ENCODE measurements at regions of chr5 and their contacts with region 1.

Region 1: DNA sequence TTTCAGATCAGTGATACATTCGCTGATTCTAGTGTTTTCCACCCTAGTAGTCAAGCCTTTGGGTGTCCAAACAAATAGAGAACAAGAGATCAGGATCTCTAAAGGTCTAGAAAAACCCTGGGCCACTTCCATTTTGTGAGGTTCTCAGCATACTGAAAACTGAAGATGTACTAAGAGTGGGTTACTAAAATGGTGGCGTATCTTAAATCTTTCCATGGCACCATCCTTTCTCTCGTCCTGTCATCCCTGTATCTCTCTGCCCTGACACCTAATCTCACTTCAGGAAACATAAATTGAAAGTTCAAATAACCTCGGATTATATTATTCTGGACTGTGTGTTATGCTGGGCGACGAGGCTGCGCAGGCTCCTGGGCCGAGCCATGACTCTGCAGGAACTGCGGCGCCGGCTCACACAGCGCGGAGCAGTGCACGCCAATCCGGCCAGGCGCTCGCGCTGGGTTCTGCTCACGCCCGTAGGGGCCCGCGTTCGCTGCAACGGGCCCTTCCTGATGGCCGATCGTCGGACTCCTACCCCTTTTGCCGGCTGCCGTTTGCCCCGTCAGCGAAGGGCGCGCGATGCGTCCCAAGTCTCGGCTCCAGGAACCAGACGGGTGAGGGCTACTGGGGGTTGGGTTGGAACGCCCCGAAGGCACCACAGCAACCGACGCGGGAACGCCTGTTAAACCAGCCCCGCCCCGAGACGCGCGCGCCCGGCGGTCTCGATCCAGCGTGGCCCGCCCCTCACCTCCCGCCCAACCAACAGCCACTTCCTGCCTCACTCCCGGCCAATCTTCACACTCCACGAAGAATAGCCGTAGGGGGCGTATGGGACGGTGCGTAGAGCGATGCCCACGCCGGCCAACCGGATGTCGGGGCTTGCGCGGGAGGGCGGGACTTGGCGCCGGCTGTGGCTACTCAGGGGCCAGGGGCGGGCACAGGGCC is 503 bp upstream of the CANX start:
- DNase-seq: peak; percentile 99
- H3K4me3 ChIP-seq: peak overlapping the region; percentile 76 to 93
- H3K4me3 Mint-ChIP-seq: peak overlapping the region; percentile 91 to 97 (median 95)
- H3K27ac ChIP-seq: peak overlapping the region; percentile 95
- H3K27ac Mint-ChIP-seq: peak overlapping the region; percentile 97 to 100 (median 99)
- H3K4me1 ChIP-seq: peaks cover 46% of the 10 kb centered on the region
- H3K4me1 Mint-ChIP-seq: peaks cover 24 to 63% (median 42%) of the 10 kb centered on the region in 4 donors
- H3K27me3 ChIP-seq: no peaks in the 10 kb centered on the region
- H3K27me3 Mint-ChIP-seq: no peaks in the 10 kb centered on the region

Region 2: DNA sequence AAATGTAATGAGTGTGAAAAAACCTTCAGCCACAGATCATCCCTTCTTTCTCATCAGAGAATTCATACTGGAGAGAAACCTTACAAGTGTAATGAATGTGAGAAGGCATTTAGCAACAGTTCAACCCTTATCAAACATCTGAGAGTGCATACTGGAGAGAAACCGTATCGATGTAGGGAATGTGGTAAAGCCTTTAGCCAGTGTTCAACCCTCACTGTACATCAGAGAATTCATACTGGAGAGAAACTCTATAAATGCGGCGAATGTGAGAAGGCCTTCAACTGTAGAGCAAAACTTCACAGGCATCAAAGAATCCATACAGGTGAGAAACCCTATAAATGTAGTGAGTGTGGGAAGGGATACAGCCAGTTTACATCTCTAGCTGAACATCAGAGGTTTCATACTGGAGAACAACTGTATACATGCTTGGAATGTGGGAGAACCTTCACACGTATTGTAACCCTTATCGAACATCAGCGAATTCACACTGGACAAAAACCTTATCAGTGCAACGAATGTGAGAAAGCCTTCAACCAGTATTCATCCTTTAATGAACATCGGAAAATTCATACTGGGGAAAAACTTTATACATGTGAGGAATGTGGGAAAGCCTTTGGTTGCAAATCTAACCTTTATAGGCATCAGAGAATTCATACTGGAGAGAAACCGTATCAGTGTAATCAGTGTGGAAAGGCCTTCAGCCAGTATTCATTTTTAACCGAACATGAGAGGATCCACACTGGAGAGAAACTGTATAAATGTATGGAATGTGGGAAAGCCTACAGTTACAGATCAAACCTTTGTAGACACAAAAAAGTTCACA is 618.9 kb before region 1 on chr5:
- CTCF ChIA-PET with region 1: no interaction called
- POLR2A ChIA-PET with region 1: no interaction called
- intact Hi-C with region 1: no loop called
- DNase-seq: no peak
- H3K4me3 ChIP-seq: no peak overlapping the region
- H3K4me3 Mint-ChIP-seq: no peak overlapping the region
- H3K27ac ChIP-seq: no peak overlapping the region
- H3K27ac Mint-ChIP-seq: no peak overlapping the region
- H3K4me1 ChIP-seq: no peaks in the 10 kb centered on the region
- H3K4me1 Mint-ChIP-seq: no peaks in the 10 kb centered on the region
- H3K27me3 ChIP-seq: no peaks in the 10 kb centered on the region
- H3K27me3 Mint-ChIP-seq: no peaks in the 10 kb centered on the region

Region 3: GRCh38 chr5:179550511-179551230 is 147.6 kb before region 1 on chr5 and contains the start of gene RUFY1:
- CTCF ChIA-PET with region 1: no interaction called
- POLR2A ChIA-PET with region 1: interaction called, 4 read pairs
- intact Hi-C with region 1: loop called (anchors 1 kb)
- DNase-seq: peak; percentile 81 to 92 (median 87)
- H3K4me3 ChIP-seq: peak within 1 kb of the TSS; percentile 78 to 91
- H3K4me3 Mint-ChIP-seq: peak within 1 kb of the TSS; percentile 94 to 99 (median 96)
- H3K27ac ChIP-seq: peak within 1 kb of the TSS; percentile 66
- H3K27ac Mint-ChIP-seq: peak within 1 kb of the TSS; percentile 94 to 99 (median 97)
- H3K4me1 ChIP-seq: peaks cover 30% of the 10 kb centered on the region
- H3K4me1 Mint-ChIP-seq: peaks cover 17 to 45% (median 27%) of the 10 kb centered on the region in 4 donors
- H3K27me3 ChIP-seq: no peaks in the 10 kb centered on the region
- H3K27me3 Mint-ChIP-seq: no peaks in the 10 kb centered on the region
- total RNA-seq, gene RUFY1: 59.1 to 61.5 TPM

Region 4: GRCh38 chr5:179559284-179560252 is 138.7 kb before region 1 on chr5:
- CTCF ChIA-PET with region 1: no interaction called
- POLR2A ChIA-PET with region 1: interaction called, 3 read pairs
- intact Hi-C with region 1: loop called (anchors 2 kb)
- DNase-seq: peak; percentile 85 to 97 (median 92)
- H3K4me3 ChIP-seq: peak overlapping the region; percentile 50 to 64
- H3K4me3 Mint-ChIP-seq: peak overlapping the region; percentile 84 to 98 (median 90)
- H3K27ac ChIP-seq: peak overlapping the region; percentile 62
- H3K27ac Mint-ChIP-seq: peak overlapping the region; percentile 80 to 96 (median 93)
- H3K4me1 ChIP-seq: peaks cover 11% of the 10 kb centered on the region
- H3K4me1 Mint-ChIP-seq: peaks cover 16 to 28% (median 24%) of the 10 kb centered on the region in 4 donors
- H3K27me3 ChIP-seq: no peaks in the 10 kb centered on the region
- H3K27me3 Mint-ChIP-seq: no peaks in the 10 kb centered on the region

Region 5: DNA sequence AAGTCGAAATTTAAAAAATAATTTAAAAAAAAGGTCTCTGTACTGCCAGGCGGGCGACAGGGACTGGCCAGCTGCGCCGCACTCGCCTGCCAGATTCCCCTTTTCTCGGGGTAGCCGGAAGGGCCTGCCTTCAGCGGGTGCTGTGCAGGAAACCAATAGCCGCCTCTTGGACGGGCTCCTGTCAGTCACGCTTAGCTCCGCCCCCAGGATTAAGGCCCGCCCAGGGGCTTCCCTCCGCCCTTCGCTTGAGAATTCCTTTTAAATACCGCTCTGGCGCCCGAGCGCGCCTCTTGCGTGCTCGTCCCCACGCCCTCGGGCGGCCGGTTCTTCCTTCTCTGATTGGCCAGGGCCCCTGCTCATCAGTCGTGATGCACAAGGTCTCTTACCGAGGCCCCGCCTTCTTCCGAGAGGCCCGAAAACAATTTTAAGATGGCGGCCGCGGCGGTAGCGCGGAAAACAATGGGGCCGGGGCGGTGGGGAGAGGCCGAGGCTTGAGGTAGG is 34.2 kb after region 1 on chr5 and contains the start of gene MAML1:
- CTCF ChIA-PET with region 1: interaction called, 3 read pairs
- POLR2A ChIA-PET with region 1: interaction called, 71 read pairs
- intact Hi-C with region 1: loop called (anchors 1 kb)
- DNase-seq: peak; percentile 99 to 100 (median 99)
- H3K4me3 ChIP-seq: peak within 1 kb of the TSS; percentile 53 to 62
- H3K4me3 Mint-ChIP-seq: peak within 1 kb of the TSS; percentile 92 to 97 (median 95)
- H3K27ac ChIP-seq: peak within 1 kb of the TSS; percentile 96
- H3K27ac Mint-ChIP-seq: peak within 1 kb of the TSS; percentile 92 to 99 (median 96)
- H3K4me1 ChIP-seq: peaks cover 44% of the 10 kb centered on the region
- H3K4me1 Mint-ChIP-seq: peaks cover 25 to 51% (median 37%) of the 10 kb centered on the region in 4 donors
- H3K27me3 ChIP-seq: no peaks in the 10 kb centered on the region
- H3K27me3 Mint-ChIP-seq: no peaks in the 10 kb centered on the region
- total RNA-seq, gene MAML1: 52.4 to 56.5 TPM

Measured in CD4-positive, alpha-beta memory T cell (primary cell).